ENCODE measurements at regions of chr7 and their contacts with region 1.

Region 1: GRCh38 chr7:141737834-141738591 is at the start of gene SSBP1:
- DNase-seq: peak; percentile 86
- H3K4me3 ChIP-seq: peak within 1 kb of the TSS; percentile 99
- CTCF ChIP-seq: peak; percentile 73

Region 2: GRCh38 chr7:141522657-141523342 is 215.2 kb before region 1 on chr7:
- CTCF ChIA-PET with region 1: no interaction called
- POLR2A ChIA-PET with region 1: no interaction called
- DNase-seq: no peak
- H3K4me3 ChIP-seq: no peak overlapping the region
- CTCF ChIP-seq: no peak

Region 3: GRCh38 chr7:141654551-141654950 is 83.5 kb before region 1 on chr7:
- CTCF ChIA-PET with region 1: interaction called, 12 read pairs
- POLR2A ChIA-PET with region 1: no interaction called
- DNase-seq: peak; percentile 16
- H3K4me3 ChIP-seq: no peak overlapping the region
- CTCF ChIP-seq: peak; percentile 78

Region 4: DNA sequence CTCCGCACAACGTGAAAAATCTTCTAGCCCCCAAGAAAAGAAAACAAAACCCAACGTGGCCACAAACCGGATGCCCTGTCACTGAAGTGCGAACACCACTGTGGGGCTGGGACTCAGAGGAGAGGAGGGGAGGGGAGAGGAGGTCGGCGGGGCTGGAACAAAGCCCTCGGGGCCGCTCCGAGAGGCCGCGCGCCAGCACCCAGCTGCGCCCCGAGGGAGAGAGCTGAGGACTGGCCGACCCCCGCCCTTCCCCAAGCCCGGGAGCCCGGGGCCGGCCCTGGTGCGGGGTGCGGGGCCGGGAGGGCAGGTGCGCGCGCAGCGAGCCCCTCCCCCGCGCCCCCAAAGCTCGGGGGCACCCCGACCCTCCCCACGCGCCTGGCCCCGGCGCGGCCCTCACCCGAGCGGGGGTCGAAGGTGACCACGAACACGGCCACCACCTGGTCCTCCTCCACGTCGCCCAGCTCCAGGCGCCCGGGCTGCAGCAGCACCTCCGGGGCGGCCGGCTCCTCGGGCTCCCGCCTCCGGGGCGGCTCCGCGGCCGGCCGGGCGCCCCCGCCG is 36.4 kb before region 1 on chr7:
- CTCF ChIA-PET with region 1: interaction called, 35 read pairs
- POLR2A ChIA-PET with region 1: no interaction called
- DNase-seq: no peak
- H3K4me3 ChIP-seq: peak overlapping the region; percentile 68
- CTCF ChIP-seq: no peak

Region 5: DNA sequence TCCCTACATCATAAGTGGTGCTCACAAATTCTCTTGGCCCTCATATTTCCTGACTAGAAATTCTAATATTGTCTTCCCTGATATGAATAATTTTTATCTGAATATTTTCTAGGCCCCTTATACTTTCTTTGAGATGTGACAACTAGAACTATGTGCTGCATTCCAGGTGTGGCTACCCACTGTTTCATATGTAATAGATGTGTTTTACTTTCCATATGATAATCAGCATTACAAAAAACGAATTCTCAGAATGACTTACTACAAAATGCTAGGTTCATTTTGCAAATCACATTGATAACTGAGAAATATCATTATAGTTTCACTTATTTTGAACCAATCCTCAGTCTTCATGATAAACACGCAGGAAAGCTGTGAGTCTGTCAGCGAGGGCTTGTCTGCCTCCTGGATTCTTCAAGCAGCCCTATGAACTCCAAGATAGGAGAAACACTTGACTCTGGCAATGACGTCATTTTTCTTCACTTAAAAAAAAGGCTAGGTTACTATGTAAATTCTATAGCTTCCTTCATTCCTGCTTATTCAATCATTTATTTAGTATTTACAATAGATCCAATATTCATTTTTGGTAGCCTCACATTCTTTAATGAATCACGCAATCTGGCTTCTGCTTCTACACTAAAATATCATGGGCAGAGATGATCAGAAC is 25.3 kb before region 1 on chr7:
- CTCF ChIA-PET with region 1: interaction called, 11 read pairs
- POLR2A ChIA-PET with region 1: no interaction called
- DNase-seq: no peak
- H3K4me3 ChIP-seq: no peak overlapping the region
- CTCF ChIP-seq: no peak

Region 6: GRCh38 chr7:141748401-141748800 is 10.4 kb after region 1 on chr7:
- CTCF ChIA-PET with region 1: interaction called, 17 read pairs
- POLR2A ChIA-PET with region 1: no interaction called
- DNase-seq: no peak
- H3K4me3 ChIP-seq: no peak overlapping the region
- CTCF ChIP-seq: no peak

Region 7: GRCh38 chr7:141754939-141755338 is 16.9 kb after region 1 on chr7:
- CTCF ChIA-PET with region 1: interaction called, 13 read pairs
- POLR2A ChIA-PET with region 1: no interaction called
- DNase-seq: no peak
- H3K4me3 ChIP-seq: no peak overlapping the region
- CTCF ChIP-seq: peak; percentile 21

Region 8: DNA sequence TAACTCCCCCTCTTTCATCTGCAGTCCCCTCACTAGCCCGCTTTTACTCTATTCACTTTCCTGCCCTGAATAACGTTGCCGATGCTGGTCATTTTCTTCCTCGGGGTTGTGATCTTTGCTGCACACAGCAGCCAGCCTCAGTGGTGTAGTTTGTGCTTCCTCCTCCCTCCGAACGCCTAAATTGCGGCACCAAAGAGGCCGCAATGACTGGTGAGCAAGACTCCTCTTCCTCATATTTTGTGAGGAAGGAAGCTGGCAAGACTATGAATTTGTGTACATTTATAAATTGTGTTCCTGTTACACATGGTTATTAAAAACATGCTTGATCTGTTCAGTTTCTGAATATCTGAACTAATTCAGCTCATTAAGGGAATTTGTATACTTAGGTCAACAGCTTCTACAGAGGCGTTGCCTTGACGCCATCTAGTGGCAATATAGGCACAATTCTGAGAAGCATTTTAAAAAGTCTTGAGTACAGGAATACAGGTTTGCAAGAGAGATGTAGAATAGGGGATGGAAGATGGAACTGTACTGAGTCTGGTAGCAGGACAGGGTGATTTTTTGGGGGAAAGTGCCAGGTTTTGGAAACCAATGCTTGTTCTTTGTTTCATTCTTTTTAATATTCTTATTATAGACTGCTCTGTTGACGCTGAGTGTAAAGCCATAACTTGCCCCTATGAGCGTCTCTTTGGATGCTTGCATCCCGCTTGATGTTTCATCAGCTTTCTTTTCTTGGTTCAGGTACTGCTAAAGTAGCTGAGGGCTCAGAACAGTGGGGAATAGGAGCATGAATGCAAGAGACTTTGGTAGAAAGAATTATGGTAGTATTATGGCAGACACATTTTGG is 47.9 kb after region 1 on chr7:
- CTCF ChIA-PET with region 1: interaction called, 26 read pairs
- POLR2A ChIA-PET with region 1: no interaction called
- DNase-seq: peak; percentile 5
- H3K4me3 ChIP-seq: no peak overlapping the region
- CTCF ChIP-seq: peak; percentile 64

Measured in AG04449 (cell line).